Natural killer cell (primary cell): ENCODE measurements at regions of chr14 and their contacts with region 1.

Region 1: GRCh38 chr14:34539407-34540180 is at the start of gene EAPP:
- DNase-seq: peak; percentile 92 to 97
- ATAC-seq: peak; percentile 98 to 100 (median 99)
- H3K4me3 ChIP-seq: peak within 1 kb of the TSS; percentile 87
- H3K4me3 Mint-ChIP-seq: peak within 1 kb of the TSS; percentile 99
- H3K27ac ChIP-seq: peak within 1 kb of the TSS; percentile 94
- H3K27ac Mint-ChIP-seq: peak within 1 kb of the TSS; percentile 98 to 100
- H3K4me1 ChIP-seq: peaks cover 18% of the 10 kb centered on the region
- H3K4me1 Mint-ChIP-seq: peaks cover 18 to 20% of the 10 kb centered on the region in 2 donors
- H3K27me3 ChIP-seq: no peaks in the 10 kb centered on the region
- H3K27me3 Mint-ChIP-seq: no peaks in the 10 kb centered on the region
- CTCF ChIP-seq: no peak
- total RNA-seq, gene EAPP: 70.5 to 96.6 (median 76.1) TPM

Region 2: DNA sequence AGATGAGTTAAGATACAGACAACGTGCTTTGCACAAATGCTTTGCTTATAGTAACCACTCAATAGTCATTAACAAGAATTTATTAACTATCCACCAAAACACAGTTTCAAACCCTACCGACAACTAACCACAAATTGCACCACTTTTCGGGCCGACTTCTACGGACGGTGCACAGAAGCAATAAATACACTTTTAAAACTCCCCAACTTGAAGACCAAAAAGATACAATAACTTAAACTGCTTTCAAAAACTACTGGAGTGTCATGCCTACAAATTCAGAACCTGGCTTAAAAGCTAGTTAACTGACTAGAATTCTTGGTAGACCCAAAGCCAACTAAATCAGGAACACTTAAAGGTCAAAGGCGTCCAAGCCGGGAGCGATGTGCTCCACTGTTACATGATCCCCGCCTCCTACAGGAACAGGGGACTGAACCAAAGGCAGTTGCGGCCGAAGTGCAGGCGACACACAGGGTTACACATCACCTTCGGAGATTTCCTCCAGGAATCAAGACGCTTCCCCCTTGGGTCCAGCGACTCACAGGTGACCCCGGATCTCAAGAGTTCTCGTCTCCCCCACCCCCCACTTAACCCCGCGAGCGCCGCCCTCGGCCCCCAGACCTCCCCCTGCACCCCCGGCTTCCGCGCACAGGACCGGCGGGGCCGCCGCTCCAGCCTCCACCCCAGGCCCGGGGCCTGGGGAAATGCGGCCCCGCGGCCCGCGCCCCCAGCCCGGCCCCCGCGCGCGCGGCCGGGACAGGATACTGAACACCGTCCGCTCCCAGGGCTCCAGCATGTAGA is 78.1 kb before region 1 on chr14:
- intact Hi-C with region 1: loop called (anchors 5 kb)
- DNase-seq: peak in 1 of 2 donors; percentile 46
- ATAC-seq: peak in 1 of 3 donors; percentile 0
- H3K4me3 ChIP-seq: peak overlapping the region; percentile 73
- H3K4me3 Mint-ChIP-seq: peak overlapping the region; percentile 92
- H3K27ac ChIP-seq: peak overlapping the region; percentile 42
- H3K27ac Mint-ChIP-seq: peak overlapping the region; percentile 76 to 82
- H3K4me1 ChIP-seq: peaks cover 12% of the 10 kb centered on the region
- H3K4me1 Mint-ChIP-seq: peaks cover 10 to 15% of the 10 kb centered on the region in 2 donors
- H3K27me3 ChIP-seq: no peaks in the 10 kb centered on the region
- H3K27me3 Mint-ChIP-seq: no peaks in the 10 kb centered on the region
- CTCF ChIP-seq: no peak

Region 3: GRCh38 chr14:34629657-34630529 is 90.3 kb after region 1 on chr14 and contains the start of gene SNX6:
- intact Hi-C with region 1: loop called (anchors 5 kb)
- DNase-seq: peak; percentile 80 to 93
- ATAC-seq: peak; percentile 98 to 99 (median 99)
- H3K4me3 ChIP-seq: peak within 1 kb of the TSS; percentile 94
- H3K4me3 Mint-ChIP-seq: peak within 1 kb of the TSS; percentile 93
- H3K27ac ChIP-seq: peak within 1 kb of the TSS; percentile 95
- H3K27ac Mint-ChIP-seq: peak within 1 kb of the TSS; percentile 83 to 96
- H3K4me1 ChIP-seq: peaks cover 19% of the 10 kb centered on the region
- H3K4me1 Mint-ChIP-seq: peaks cover 17 to 22% of the 10 kb centered on the region in 2 donors
- H3K27me3 ChIP-seq: no peaks in the 10 kb centered on the region
- H3K27me3 Mint-ChIP-seq: peaks cover 0 to 9% of the 10 kb centered on the region in 2 donors
- CTCF ChIP-seq: no peak
- total RNA-seq, gene SNX6: 62.6 to 77.7 (median 67.1) TPM